Naive thymus-derived CD4-positive, alpha-beta T cell (primary cell): ENCODE measurements at regions of chr5 and their contacts with region 1.

Region 1: DNA sequence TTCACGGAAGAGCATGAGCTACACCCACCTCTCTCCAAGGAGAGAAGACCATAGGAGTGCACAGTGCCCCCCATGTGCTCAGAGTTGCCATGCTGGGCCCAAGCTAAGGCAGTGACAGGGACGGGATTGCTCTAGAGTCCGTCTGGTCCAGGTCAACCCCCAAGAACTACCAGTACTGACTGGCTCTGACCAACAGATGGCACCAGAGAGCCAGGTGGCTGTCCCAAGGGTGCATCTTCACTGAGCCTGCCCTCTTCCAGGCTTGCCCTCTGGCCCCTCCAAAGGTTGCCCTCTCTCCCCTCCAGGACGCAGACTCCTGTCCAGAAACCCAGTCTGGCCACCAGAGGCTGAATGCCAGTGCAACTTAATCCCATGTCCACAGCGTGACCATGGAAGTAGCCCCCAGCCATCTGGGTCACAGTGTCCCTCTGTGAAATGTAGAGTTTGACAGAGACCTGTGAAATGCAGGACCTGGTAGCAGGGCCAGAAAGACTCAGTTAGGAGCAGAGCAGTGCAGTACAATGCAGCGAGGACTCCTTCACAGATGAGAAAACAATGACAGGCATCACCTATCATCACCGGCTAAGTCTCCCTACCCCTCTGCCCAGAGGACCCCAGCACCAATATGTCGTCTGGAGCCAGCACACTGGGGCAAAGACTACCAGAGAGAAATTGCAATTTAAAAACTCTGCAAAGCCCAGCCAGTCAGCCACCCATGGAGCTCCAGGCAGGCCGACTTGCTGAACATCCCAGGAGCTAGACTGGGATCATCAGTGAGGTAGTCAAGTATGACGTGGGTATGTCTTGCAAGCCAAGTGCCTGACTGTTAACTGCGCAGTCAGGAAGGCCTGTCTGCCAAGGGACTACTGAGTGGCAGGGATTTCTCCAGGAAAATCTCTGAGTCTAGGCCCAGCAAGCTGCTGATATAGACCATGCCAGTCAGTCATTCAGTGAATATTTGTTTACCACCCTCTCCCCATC is 7.7 kb upstream of the SKP1 start:
- DNase-seq: peak; percentile 52 to 83 (median 65)
- ATAC-seq: peak; percentile 94
- H3K4me3 ChIP-seq: no peak overlapping the region
- H3K4me3 Mint-ChIP-seq: no peak overlapping the region
- H3K27ac ChIP-seq: no peak overlapping the region
- H3K27ac Mint-ChIP-seq: peak overlapping the region in 1 of 9 donors; percentile 16
- H3K4me1 ChIP-seq: no peaks in the 10 kb centered on the region
- H3K4me1 Mint-ChIP-seq: peaks cover 0 to 5% (median 0%) of the 10 kb centered on the region in 7 donors
- H3K27me3 ChIP-seq: no peaks in the 10 kb centered on the region
- H3K27me3 Mint-ChIP-seq: peaks cover 0 to 4% (median 0%) of the 10 kb centered on the region in 5 donors

Region 2: DNA sequence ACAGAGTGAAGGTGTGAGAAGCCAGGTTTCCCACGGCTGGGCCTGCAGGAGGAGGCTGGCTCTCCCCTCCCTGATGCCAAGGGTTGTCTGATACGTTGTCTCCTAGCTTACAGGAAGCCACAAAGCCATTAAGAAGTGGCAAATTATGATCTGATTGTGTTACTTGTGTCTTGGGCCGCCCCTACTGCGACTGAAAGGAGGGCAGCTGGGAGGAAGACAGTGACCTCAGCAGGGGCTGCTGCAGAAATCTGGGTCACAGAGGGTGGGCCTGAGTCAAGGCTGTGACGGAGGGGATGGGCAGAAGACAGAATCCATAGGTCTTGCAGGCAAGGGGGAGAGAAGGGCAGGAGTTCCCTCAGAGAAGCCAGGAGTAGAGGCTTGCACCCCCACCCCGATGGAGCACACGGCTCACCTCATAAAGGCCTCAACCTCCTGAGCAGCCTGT is 717.1 kb before region 1 on chr5:
- CTCF ChIA-PET with region 1: no interaction called
- POLR2A ChIA-PET with region 1: no interaction called
- intact Hi-C with region 1: no loop called
- DNase-seq: no peak
- ATAC-seq: peak; percentile 62
- H3K4me3 ChIP-seq: no peak overlapping the region
- H3K4me3 Mint-ChIP-seq: no peak overlapping the region
- H3K27ac ChIP-seq: no peak overlapping the region
- H3K27ac Mint-ChIP-seq: no peak overlapping the region
- H3K4me1 ChIP-seq: peaks cover 0 to 16% of the 10 kb centered on the region in 2 donors
- H3K4me1 Mint-ChIP-seq: peaks cover 0 to 17% (median 4%) of the 10 kb centered on the region in 7 donors
- H3K27me3 ChIP-seq: no peaks in the 10 kb centered on the region
- H3K27me3 Mint-ChIP-seq: peaks cover 5 to 21% (median 10%) of the 10 kb centered on the region in 5 donors

Region 3: DNA sequence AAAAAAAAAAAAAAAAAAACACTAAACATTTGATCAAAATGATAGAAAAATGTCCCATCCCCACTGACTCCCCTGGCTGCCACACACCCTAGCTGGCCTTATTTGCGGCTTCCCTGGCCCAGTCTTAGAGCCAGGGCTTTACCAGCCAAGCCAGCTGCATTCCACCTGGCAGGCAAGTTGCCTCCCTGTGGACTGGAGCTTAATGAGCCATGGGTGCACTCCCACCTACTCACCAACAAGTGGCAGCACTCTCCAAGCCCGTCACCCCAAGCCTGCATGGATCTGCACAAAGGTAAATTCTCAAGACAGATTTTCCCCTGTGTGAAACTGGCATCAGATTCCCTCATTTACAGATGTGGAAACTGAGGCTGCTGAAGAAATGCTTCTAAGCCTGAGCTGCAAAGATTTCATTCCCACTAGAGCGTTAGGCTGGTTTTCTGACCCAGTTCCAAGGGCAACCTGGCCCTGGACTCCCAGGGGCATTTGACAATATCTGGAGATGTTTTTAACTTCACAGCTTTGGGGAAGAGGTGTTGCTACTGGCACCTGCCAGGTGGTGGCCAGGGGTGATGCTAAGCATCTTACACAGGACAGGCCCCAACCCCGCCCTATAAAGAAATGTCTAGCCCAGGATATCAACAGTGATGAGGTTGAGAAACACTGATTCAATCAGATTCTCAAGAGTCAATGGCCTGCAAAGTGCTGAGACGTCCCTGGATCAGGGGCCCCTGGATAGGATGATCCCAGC is 157.8 kb before region 1 on chr5:
- CTCF ChIA-PET with region 1: interaction called, 4 read pairs
- POLR2A ChIA-PET with region 1: no interaction called
- intact Hi-C with region 1: loop called in 1 of 2 experiments (anchors 1 kb)
- DNase-seq: peak in 8 of 9 donors; percentile 41 to 73 (median 62)
- ATAC-seq: peak; percentile 96
- H3K4me3 ChIP-seq: no peak overlapping the region
- H3K4me3 Mint-ChIP-seq: no peak overlapping the region
- H3K27ac ChIP-seq: no peak overlapping the region
- H3K27ac Mint-ChIP-seq: peak overlapping the region in 2 of 9 donors; percentile 36 to 52
- H3K4me1 ChIP-seq: no peaks in the 10 kb centered on the region
- H3K4me1 Mint-ChIP-seq: peaks cover 1 to 6% (median 4%) of the 10 kb centered on the region in 7 donors
- H3K27me3 ChIP-seq: no peaks in the 10 kb centered on the region
- H3K27me3 Mint-ChIP-seq: peaks cover 0 to 17% (median 0%) of the 10 kb centered on the region in 5 donors